ENCODE measurements at regions of chr10 and their contacts with region 1.

Region 1: GRCh38 chr10:70233109-70233938 is at the start of gene PPA1:
- DNase-seq: peak; percentile 95
- H3K4me3 ChIP-seq: peak within 1 kb of the TSS; percentile 64 to 94 (median 77)
- H3K27ac ChIP-seq: peak within 1 kb of the TSS; percentile 84
- H3K4me1 ChIP-seq: peaks cover 14% of the 10 kb centered on the region
- H3K27me3 ChIP-seq: no peaks in the 10 kb centered on the region
- CTCF ChIP-seq: peak; percentile 21 to 31
- total RNA-seq, gene PPA1: 170 to 218 TPM

Region 2: GRCh38 chr10:70191972-70192305 is 41.4 kb before region 1 on chr10:
- CTCF ChIA-PET with region 1: no interaction called
- dilution Hi-C with region 1: loop called (anchors 5 kb)
- in situ Hi-C with region 1: no loop called
- intact Hi-C with region 1: no loop called
- DNase-seq: peak; percentile 66
- H3K4me3 ChIP-seq: no peak overlapping the region
- H3K27ac ChIP-seq: no peak overlapping the region
- H3K4me1 ChIP-seq: no peaks in the 10 kb centered on the region
- H3K27me3 ChIP-seq: no peaks in the 10 kb centered on the region
- CTCF ChIP-seq: no peak

Region 3: DNA sequence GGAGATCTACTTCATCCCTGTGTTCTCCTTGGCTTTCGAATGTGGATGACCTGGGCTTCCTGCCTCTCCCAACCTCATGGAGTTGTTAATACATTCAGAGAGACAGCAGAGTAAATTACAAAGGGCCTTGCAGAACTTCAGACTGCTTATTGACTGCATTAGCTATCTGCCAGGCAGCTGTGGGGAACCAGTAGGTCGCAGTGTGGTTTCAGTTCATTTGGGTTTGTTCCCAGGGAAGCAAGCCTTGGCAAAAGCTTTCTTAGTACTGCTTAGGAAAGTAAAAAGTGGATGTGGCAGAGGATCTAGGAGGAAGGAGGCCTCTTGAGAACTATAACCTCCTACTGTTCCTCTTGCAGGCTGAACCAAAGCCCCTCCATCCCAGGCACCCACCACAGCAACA is 41.3 kb after region 1 on chr10:
- CTCF ChIA-PET with region 1: no interaction called
- dilution Hi-C with region 1: no loop called
- in situ Hi-C with region 1: no loop called
- intact Hi-C with region 1: no loop called
- DNase-seq: no peak
- H3K4me3 ChIP-seq: no peak overlapping the region
- H3K27ac ChIP-seq: no peak overlapping the region
- H3K4me1 ChIP-seq: no peaks in the 10 kb centered on the region
- H3K27me3 ChIP-seq: no peaks in the 10 kb centered on the region
- CTCF ChIP-seq: no peak

Region 4: DNA sequence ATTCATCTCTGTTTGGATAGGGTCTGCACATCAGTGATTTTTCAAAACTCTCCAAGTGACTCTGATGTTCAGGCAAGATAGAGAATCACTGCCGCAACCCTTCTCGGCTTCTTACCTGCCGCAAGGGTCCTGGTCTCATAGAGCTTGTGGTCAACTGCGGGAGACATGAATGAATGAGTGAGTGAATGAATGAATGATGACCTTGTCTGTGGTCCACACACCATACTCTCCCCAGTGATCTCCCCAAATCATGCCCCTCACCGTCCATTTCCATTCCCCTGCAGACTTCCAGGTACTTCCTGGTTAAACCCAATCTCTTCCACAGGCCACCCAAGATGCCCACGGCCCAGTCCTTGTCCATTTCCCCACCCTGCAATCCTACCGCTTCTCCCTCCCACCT is 56.4 kb after region 1 on chr10:
- CTCF ChIA-PET with region 1: no interaction called
- dilution Hi-C with region 1: no loop called
- in situ Hi-C with region 1: no loop called
- intact Hi-C with region 1: loop called (anchors 2 kb)
- DNase-seq: no peak
- H3K4me3 ChIP-seq: no peak overlapping the region
- H3K27ac ChIP-seq: no peak overlapping the region
- H3K4me1 ChIP-seq: peaks cover 5% of the 10 kb centered on the region
- H3K27me3 ChIP-seq: no peaks in the 10 kb centered on the region
- CTCF ChIP-seq: no peak

Region 5: GRCh38 chr10:71001470-71001869 is 768.1 kb after region 1 on chr10:
- CTCF ChIA-PET with region 1: no interaction called
- dilution Hi-C with region 1: no loop called
- in situ Hi-C with region 1: no loop called
- intact Hi-C with region 1: no loop called
- DNase-seq: peak; percentile 9
- H3K4me3 ChIP-seq: no peak overlapping the region
- H3K27ac ChIP-seq: no peak overlapping the region
- H3K4me1 ChIP-seq: peaks cover 12% of the 10 kb centered on the region
- H3K27me3 ChIP-seq: no peaks in the 10 kb centered on the region
- CTCF ChIP-seq: no peak